Activated CD8-positive, alpha-beta T cell treated with anti-CD3 and anti-CD28 coated beads for 36 hours (primary cell): ENCODE measurements at regions of chr1 and their contacts with region 1.

Region 1: DNA sequence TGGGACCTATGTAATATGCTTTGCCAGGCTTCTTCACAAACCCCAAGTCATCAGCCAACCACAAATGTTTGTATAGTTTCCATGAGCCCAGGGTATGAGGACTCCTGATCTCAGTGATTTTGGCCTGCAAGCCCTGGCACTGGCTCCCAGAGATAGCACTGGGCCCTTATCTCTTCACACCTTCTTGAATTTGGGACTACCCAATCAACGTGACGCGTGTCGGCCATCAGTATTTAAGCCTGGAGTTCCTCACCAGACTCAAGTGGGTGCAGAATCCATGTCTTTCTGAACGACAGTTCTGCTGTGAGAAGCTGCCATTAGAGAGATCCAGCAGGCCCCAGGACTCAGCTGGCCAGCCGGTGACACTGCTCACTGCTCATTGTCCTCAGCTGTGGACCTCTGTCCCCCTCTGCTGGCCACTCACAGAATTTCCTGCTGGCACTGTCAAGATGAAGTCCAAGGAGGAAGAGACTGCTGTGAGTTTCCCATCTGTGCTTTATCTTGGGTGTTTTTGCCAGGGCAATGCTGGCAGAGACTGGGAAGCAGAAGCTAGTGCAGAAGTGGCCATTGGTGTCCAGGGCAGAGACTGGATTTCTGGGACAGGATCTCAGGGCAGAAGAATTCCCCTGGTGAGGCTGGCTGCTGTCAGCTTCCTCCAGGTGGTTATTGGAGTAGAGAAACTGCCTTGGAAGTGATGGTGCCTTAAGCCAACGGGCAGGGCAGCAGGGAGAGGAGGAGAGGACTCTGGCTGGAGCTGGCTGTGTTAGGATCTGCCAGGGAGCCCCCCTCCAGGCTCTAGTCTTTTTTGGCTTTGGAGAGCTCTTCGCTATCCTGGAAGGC is 28.4 kb downstream of the TMCC2 start:
- DNase-seq: peak; percentile 93
- ATAC-seq: peak; percentile 97
- H3K4me3 Mint-ChIP-seq: no peak overlapping the region
- H3K27ac Mint-ChIP-seq: no peak overlapping the region
- H3K4me1 Mint-ChIP-seq: peaks cover 9% of the 10 kb centered on the region
- H3K27me3 Mint-ChIP-seq: no peaks in the 10 kb centered on the region
- CTCF ChIP-seq: peak; percentile 97

Region 2: DNA sequence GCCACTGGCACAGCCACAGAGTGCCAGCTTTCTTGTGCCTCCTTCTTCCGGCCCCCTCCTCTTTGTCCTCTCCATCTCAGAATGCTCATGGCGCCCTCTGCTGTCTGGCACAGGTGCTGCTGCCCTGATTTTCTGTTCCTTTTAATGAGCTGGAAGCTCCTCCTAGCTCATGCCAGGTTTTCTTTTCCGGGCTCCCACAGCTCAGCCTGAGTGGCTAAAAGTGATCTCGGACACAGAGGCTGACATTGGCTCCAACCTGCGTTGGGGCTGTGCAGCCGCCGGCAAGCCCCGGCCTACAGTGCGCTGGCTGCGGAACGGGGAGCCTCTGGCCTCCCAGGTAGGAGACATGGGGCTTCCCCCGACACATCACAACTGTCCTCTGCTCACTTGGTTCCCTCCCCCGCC is 194.5 kb before region 1 on chr1:
- CTCF ChIA-PET with region 1: interaction called, 24 read pairs
- POLR2A ChIA-PET with region 1: no interaction called
- intact Hi-C with region 1: no loop called
- DNase-seq: peak; percentile 83
- ATAC-seq: peak; percentile 86
- H3K4me3 Mint-ChIP-seq: no peak overlapping the region
- H3K27ac Mint-ChIP-seq: no peak overlapping the region
- H3K4me1 Mint-ChIP-seq: no peaks in the 10 kb centered on the region
- H3K27me3 Mint-ChIP-seq: no peaks in the 10 kb centered on the region
- CTCF ChIP-seq: peak; percentile 89

Region 3: GRCh38 chr1:205121660-205122488 is 134.3 kb before region 1 on chr1 and contains the start of gene RBBP5:
- CTCF ChIA-PET with region 1: interaction called, 33 read pairs
- POLR2A ChIA-PET with region 1: interaction called, 5 read pairs
- intact Hi-C with region 1: loop called (anchors 10 kb)
- DNase-seq: peak; percentile 96
- ATAC-seq: peak; percentile 96
- H3K4me3 Mint-ChIP-seq: peak within 1 kb of the TSS; percentile 95
- H3K27ac Mint-ChIP-seq: peak within 1 kb of the TSS; percentile 97
- H3K4me1 Mint-ChIP-seq: peaks cover 27% of the 10 kb centered on the region
- H3K27me3 Mint-ChIP-seq: no peaks in the 10 kb centered on the region
- CTCF ChIP-seq: peak; percentile 43
- total RNA-seq, gene RBBP5: 18.8 to 21.6 TPM

Region 4: DNA sequence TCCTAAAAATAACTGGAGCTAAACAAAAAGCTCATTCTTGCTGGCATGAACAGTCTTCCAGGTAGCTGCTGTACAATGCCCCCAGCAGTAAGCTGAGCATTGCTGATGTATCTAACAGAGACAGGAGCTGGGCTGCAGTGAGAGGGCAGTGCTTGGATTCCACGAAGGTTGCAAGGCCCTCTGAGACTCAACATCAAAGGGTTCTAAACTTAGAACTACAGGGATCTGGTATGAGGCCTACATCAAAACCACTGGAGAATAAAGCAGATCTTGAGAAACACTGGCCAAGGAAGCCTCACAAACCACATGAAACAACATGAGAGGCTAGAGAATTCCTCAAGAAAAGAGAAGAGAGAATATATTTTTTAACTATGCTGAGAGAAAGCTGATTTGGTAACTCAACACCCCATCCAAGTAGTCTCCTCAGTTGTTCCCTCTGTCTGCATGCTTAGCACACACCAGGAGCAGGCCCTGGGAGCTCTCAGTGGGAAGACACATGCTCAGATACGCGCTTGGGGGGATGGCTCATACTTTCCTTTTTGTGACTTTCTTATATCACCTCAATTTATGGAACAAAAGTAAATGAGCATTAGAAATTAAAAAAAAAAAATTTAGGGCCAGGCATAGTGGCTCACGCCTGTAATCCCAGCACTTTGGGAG is 72.4 kb before region 1 on chr1:
- CTCF ChIA-PET with region 1: interaction called, 10 read pairs
- POLR2A ChIA-PET with region 1: no interaction called
- intact Hi-C with region 1: no loop called
- DNase-seq: peak; percentile 28
- ATAC-seq: no peak
- H3K4me3 Mint-ChIP-seq: no peak overlapping the region
- H3K27ac Mint-ChIP-seq: peak overlapping the region; percentile 79
- H3K4me1 Mint-ChIP-seq: peaks cover 59% of the 10 kb centered on the region
- H3K27me3 Mint-ChIP-seq: no peaks in the 10 kb centered on the region
- CTCF ChIP-seq: no peak

Region 5: GRCh38 chr1:205266611-205267305 is 10.6 kb after region 1 on chr1:
- CTCF ChIA-PET with region 1: interaction called, 59 read pairs
- POLR2A ChIA-PET with region 1: no interaction called
- intact Hi-C with region 1: no loop called
- DNase-seq: no peak
- ATAC-seq: no peak
- H3K4me3 Mint-ChIP-seq: no peak overlapping the region
- H3K27ac Mint-ChIP-seq: no peak overlapping the region
- H3K4me1 Mint-ChIP-seq: peaks cover 12% of the 10 kb centered on the region
- H3K27me3 Mint-ChIP-seq: no peaks in the 10 kb centered on the region
- CTCF ChIP-seq: no peak

Region 6: GRCh38 chr1:205321164-205321958 is 65.2 kb after region 1 on chr1 and contains the start of gene NUAK2:
- CTCF ChIA-PET with region 1: interaction called, 18 read pairs
- POLR2A ChIA-PET with region 1: no interaction called
- intact Hi-C with region 1: no loop called
- DNase-seq: peak; percentile 85
- ATAC-seq: peak; percentile 76
- H3K4me3 Mint-ChIP-seq: peak within 1 kb of the TSS; percentile 78
- H3K27ac Mint-ChIP-seq: peak within 1 kb of the TSS; percentile 82
- H3K4me1 Mint-ChIP-seq: peaks cover 56% of the 10 kb centered on the region
- H3K27me3 Mint-ChIP-seq: no peaks in the 10 kb centered on the region
- CTCF ChIP-seq: peak; percentile 34
- total RNA-seq, gene NUAK2: 1.9 TPM